ENCODE measurements at regions of chr15 and their contacts with region 1.

Region 1: DNA sequence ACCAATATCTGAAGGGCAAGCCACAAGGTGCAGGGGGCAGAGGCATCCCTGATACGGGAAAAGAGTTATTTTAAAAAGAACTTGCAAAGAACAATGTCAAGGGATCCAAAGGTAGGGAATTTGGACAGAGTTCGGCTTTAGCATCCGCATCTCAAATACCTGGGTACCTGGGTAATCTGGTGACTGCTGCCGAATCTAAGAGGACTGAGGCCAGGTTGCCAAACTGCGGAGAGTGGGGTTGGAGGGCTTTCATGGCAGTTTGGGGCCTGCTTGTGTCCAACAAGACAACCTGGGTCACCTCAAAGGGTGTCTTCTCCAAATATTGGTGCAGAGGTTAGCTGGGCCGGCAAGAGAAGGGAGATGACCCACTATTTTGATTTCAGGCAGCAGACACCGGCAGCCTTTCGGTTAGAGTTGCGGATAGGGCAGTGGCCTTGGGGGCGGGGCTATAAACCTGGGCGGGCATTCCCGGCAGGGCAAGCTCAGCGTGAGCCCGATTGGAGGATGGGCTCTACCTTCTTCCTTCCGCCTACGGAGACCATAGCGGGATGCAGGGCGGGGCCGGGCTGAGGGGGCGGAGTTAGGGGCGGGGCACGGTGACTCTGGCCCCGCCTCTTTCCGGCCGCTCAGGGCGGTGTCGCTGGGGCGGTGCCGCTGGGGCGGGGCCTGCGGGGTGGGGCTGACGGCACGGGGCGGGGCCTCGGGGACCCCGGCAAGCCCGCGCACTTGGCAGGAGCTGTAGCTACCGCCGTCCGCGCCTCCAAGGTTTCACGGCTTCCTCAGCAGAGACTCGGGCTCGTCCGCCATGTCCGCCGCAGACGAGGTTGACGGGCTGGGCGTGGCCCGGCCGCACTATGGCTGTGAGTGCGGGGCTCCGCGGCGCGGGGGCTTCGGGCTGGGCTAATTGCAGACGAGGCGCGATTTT is at the start of gene IQGAP1:
- DNase-seq: peak; percentile 86 to 96
- H3K4me3 ChIP-seq: peak within 1 kb of the TSS; percentile 87
- H3K27ac ChIP-seq: peak within 1 kb of the TSS; percentile 58
- H3K4me1 ChIP-seq: peaks cover 16% of the 10 kb centered on the region
- H3K27me3 ChIP-seq: no peaks in the 10 kb centered on the region
- CTCF ChIP-seq: no peak
- total RNA-seq, gene IQGAP1: 113 and 164 TPM in 2 replicates

Region 2: GRCh38 chr15:90184786-90185569 is 202.8 kb before region 1 on chr15:
- CTCF ChIA-PET with region 1: no interaction called
- POLR2A ChIA-PET with region 1: interaction called, 27 read pairs
- intact Hi-C with region 1: no loop called
- DNase-seq: peak; percentile 57 to 72
- H3K4me3 ChIP-seq: peak overlapping the region; percentile 71
- H3K27ac ChIP-seq: peak overlapping the region; percentile 85
- H3K4me1 ChIP-seq: peaks cover 34% of the 10 kb centered on the region
- H3K27me3 ChIP-seq: no peaks in the 10 kb centered on the region
- CTCF ChIP-seq: no peak

Region 3: DNA sequence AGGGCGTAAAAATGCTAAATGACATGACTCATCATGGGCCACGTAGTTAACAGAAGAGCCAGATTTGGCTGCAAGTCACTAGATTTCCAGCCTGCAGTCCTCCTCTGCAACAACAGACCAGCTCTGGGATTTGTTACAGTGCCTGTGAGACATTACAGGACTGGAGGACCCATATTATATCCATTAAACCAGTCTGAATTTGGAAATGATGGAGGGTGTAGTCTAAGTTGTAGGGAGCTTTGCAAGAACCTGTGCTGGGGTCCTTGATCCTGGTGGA is 24.9 kb before region 1 on chr15:
- CTCF ChIA-PET with region 1: interaction called, 6 read pairs
- POLR2A ChIA-PET with region 1: interaction called, 22 read pairs
- intact Hi-C with region 1: loop called (anchors 1 kb)
- DNase-seq: peak; percentile 21 to 71
- H3K4me3 ChIP-seq: no peak overlapping the region
- H3K27ac ChIP-seq: peak overlapping the region; percentile 94
- H3K4me1 ChIP-seq: peaks cover 47% of the 10 kb centered on the region
- H3K27me3 ChIP-seq: no peaks in the 10 kb centered on the region
- CTCF ChIP-seq: no peak

Region 4: GRCh38 chr15:90376789-90377188 is 11.0 kb before region 1 on chr15:
- CTCF ChIA-PET with region 1: no interaction called
- POLR2A ChIA-PET with region 1: interaction called, 13 read pairs
- intact Hi-C with region 1: no loop called
- DNase-seq: no peak
- H3K4me3 ChIP-seq: no peak overlapping the region
- H3K27ac ChIP-seq: no peak overlapping the region
- H3K4me1 ChIP-seq: no peaks in the 10 kb centered on the region
- H3K27me3 ChIP-seq: no peaks in the 10 kb centered on the region
- CTCF ChIP-seq: no peak

Region 5: DNA sequence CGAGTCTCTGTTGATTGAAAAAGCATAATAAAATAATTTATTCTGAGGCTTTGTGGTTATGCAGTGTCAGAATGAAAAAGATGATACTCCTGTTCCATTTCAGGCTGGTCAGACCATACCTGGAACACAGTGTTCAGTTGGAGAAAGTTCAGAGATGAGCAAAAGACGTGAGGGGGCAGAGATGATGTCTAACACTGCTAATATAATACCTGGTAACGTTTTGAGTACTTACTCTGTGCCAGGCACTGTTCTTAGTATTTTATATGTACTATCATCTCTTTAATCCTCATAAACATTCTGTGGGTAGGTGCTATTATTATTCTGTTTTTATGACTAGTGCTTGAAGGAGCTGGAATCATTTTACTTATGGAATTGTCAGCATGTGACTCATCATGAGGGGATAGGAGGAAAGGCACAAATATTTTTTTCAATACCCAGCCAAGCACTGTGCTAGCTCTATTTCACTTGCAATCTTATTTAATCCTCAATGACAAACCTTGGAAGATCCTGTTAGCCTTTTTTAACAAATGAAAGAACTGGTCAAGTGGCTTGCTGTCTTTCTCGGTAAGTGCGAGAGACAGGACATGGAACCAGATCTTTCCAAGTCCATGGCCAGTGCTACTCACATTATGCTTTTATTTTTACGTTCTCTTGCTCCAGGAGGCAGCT is 32.1 kb after region 1 on chr15:
- CTCF ChIA-PET with region 1: no interaction called
- POLR2A ChIA-PET with region 1: interaction called, 3 read pairs
- intact Hi-C with region 1: loop called (anchors 5 kb)
- DNase-seq: peak; percentile 11 to 89
- H3K4me3 ChIP-seq: peak overlapping the region; percentile 26; the same call in 1 of the 2 replicates
- H3K27ac ChIP-seq: peak overlapping the region; percentile 83
- H3K4me1 ChIP-seq: peaks cover 48% of the 10 kb centered on the region
- H3K27me3 ChIP-seq: no peaks in the 10 kb centered on the region
- CTCF ChIP-seq: no peak

Region 6: GRCh38 chr15:90550919-90551318 is 163.1 kb after region 1 on chr15:
- CTCF ChIA-PET with region 1: no interaction called
- POLR2A ChIA-PET with region 1: interaction called, 15 read pairs
- intact Hi-C with region 1: no loop called
- DNase-seq: no peak
- H3K4me3 ChIP-seq: no peak overlapping the region
- H3K27ac ChIP-seq: no peak overlapping the region
- H3K4me1 ChIP-seq: no peaks in the 10 kb centered on the region
- H3K27me3 ChIP-seq: no peaks in the 10 kb centered on the region
- CTCF ChIP-seq: no peak

Region 7: DNA sequence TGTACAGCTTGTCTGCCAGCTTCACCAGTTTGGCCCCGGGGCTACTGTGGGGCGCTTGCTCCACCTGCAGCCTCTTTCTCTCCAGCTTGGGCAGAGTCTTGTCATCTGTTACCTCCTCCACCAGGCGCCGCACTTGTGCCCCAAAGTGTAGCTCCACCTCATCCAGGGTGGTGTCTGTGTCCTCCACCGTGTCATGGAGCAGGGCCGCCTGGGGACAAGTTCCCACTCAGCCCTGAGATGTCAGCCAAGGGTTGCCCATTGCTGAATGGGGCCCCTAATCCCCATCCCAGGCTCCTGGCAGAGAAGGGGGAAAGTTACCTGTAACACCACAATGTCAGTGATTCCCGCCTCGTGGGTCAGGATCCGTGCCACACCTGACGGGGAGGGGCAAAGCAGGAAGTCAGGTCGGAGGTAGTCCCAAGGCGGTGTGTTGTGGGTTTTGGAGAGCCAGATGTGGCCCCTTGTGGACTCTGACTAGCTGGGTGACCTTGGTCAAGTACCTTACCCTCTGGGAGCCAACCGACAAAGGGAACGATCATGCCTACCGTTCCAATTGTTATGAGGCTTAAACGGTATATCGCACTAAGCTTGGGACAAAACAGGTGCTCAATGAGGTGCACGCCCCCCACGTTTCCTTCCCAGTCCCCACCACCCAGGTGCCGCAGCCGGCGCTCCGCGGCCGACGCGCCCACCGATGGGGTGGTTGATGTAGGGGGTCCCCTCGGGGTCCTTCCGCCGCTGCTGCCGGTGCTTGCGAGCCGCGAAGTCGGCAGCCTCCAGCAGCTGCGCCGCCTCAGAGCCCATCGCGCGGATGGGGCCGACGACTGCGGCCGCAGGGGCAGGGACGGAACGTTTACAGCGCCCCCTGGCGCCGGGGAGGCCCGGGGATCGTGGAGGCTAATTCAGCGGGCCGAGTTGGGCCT is 544.2 kb after region 1 on chr15 and contains the start of gene HDDC3:
- CTCF ChIA-PET with region 1: no interaction called
- POLR2A ChIA-PET with region 1: no interaction called
- intact Hi-C with region 1: no loop called
- DNase-seq: peak; percentile 84 to 89
- H3K4me3 ChIP-seq: peak within 1 kb of the TSS; percentile 88
- H3K27ac ChIP-seq: peak within 1 kb of the TSS; percentile 58
- H3K4me1 ChIP-seq: peaks cover 33% of the 10 kb centered on the region
- H3K27me3 ChIP-seq: no peaks in the 10 kb centered on the region
- CTCF ChIP-seq: peak; percentile 88
- total RNA-seq, gene HDDC3: 18.1 and 20.9 TPM in 2 replicates